MCF 10A (cell line): ENCODE measurements at regions of chr5 and their contacts with region 1.

Region 1: GRCh38 chr5:160071516-160071915 is 47.7 kb downstream of the PWWP2A start:
- DNase-seq: no peak
- H3K4me3 Mint-ChIP-seq: no peak overlapping the region
- H3K27ac Mint-ChIP-seq: no peak overlapping the region
- H3K4me1 Mint-ChIP-seq: no peaks in the 10 kb centered on the region
- H3K27me3 Mint-ChIP-seq: no peaks in the 10 kb centered on the region
- CTCF ChIP-seq: no peak

Region 2: GRCh38 chr5:160054831-160055230 is 16.7 kb before region 1 on chr5:
- CTCF ChIA-PET with region 1: no interaction called
- POLR2A ChIA-PET with region 1: interaction called, 15 read pairs
- intact Hi-C with region 1: no loop called
- DNase-seq: peak; percentile 29
- H3K4me3 Mint-ChIP-seq: no peak overlapping the region
- H3K27ac Mint-ChIP-seq: no peak overlapping the region
- H3K4me1 Mint-ChIP-seq: no peaks in the 10 kb centered on the region
- H3K27me3 Mint-ChIP-seq: no peaks in the 10 kb centered on the region
- CTCF ChIP-seq: no peak

Region 3: DNA sequence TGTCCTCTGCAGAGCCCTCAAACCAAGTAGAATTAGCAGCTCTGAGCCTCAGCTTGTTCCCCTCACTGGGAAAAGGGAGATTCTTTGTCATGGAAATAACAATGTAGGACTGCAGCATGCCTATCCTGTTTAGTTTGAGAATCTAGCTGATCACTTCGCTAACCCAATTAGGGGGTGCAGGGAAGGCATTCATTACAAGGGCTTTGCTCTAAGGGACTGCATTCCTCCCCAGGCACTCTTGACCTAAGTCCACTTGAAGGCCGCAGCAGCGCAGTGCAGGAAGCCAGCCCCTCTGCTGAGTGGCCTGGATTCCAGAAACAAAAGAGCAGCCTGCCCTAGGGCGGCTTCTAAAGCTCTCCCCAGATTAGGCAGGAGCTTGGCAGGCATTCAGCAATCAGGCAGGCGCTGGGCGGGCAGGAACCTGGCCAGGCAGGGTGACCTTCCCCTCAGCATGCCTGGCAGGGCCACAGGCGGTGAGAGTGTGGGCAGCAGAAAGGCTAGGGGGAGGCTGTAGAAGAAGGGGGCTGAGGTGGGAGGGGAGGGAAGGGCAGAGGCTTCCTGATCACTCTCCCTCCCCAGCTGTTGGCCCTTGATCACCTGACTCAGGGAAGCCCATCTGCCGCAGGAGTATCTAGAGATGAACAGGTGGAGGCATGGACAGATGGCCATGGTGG is 216.0 kb after region 1 on chr5:
- CTCF ChIA-PET with region 1: no interaction called
- POLR2A ChIA-PET with region 1: no interaction called
- intact Hi-C with region 1: no loop called
- DNase-seq: peak; percentile 87
- H3K4me3 Mint-ChIP-seq: no peak overlapping the region
- H3K27ac Mint-ChIP-seq: no peak overlapping the region
- H3K4me1 Mint-ChIP-seq: peaks cover 18% of the 10 kb centered on the region
- H3K27me3 Mint-ChIP-seq: no peaks in the 10 kb centered on the region
- CTCF ChIP-seq: no peak